RWPE1 (cell line): ENCODE measurements at regions of chr7 and their contacts with region 1.

Region 1: GRCh38 chr7:74013519-74014267 is 14.3 kb upstream of the ELN start:
- DNase-seq: no peak
- H3K27ac ChIP-seq: peak overlapping the region; percentile 91
- CTCF ChIP-seq: no peak

Region 2: GRCh38 chr7:73971704-73972341 is 41.9 kb before region 1 on chr7:
- CTCF ChIA-PET with region 1: no interaction called
- POLR2A ChIA-PET with region 1: no interaction called
- DNase-seq: peak; percentile 40
- H3K27ac ChIP-seq: peak overlapping the region; percentile 63
- CTCF ChIP-seq: no peak; the same call in 1 of the 2 replicates

Region 3: GRCh38 chr7:74002474-74003017 is 11.1 kb before region 1 on chr7:
- CTCF ChIA-PET with region 1: no interaction called
- POLR2A ChIA-PET with region 1: no interaction called
- DNase-seq: peak; percentile 79
- H3K27ac ChIP-seq: peak overlapping the region; percentile 86
- CTCF ChIP-seq: no peak

Region 4: GRCh38 chr7:74026903-74027551 is 13.3 kb after region 1 on chr7:
- CTCF ChIA-PET with region 1: interaction called, 17 read pairs
- POLR2A ChIA-PET with region 1: no interaction called
- DNase-seq: peak; percentile 59
- H3K27ac ChIP-seq: peak overlapping the region; percentile 80
- CTCF ChIP-seq: peak; percentile 98

Region 5: GRCh38 chr7:74051629-74052410 is 38.1 kb after region 1 on chr7:
- CTCF ChIA-PET with region 1: no interaction called
- POLR2A ChIA-PET with region 1: no interaction called
- DNase-seq: peak; percentile 48
- H3K27ac ChIP-seq: peak overlapping the region; percentile 4; the same call in 1 of the 2 replicates
- CTCF ChIP-seq: no peak; the same call in 1 of the 2 replicates